ENCODE measurements at regions of chr3 and their contacts with region 1.

Region 1: DNA sequence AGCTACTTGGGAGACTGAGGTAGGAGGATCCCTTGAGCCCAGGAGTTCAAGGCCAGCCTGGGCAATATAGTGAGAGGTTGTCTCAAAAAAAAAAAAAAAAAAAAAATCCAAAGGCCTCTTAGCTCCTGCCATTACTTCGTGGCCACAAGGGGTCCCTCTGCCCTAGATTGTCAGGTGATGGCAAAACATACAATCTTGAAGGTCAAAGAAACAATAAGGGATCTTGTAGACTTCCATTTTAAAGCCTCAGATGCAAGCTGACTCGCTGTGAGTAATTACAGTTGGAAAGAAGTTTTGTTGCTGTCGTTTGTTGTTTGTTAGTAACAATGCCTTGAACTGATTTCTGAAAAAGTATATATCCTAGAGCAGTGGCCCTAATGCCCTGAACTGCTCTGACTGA is 55.9 kb upstream of the PLCL2 start:
- DNase-seq: peak; percentile 71
- H3K4me3 Mint-ChIP-seq: no peak overlapping the region
- H3K27ac Mint-ChIP-seq: no peak overlapping the region
- H3K4me1 Mint-ChIP-seq: peaks cover 15% of the 10 kb centered on the region
- H3K27me3 Mint-ChIP-seq: no peaks in the 10 kb centered on the region

Region 2: DNA sequence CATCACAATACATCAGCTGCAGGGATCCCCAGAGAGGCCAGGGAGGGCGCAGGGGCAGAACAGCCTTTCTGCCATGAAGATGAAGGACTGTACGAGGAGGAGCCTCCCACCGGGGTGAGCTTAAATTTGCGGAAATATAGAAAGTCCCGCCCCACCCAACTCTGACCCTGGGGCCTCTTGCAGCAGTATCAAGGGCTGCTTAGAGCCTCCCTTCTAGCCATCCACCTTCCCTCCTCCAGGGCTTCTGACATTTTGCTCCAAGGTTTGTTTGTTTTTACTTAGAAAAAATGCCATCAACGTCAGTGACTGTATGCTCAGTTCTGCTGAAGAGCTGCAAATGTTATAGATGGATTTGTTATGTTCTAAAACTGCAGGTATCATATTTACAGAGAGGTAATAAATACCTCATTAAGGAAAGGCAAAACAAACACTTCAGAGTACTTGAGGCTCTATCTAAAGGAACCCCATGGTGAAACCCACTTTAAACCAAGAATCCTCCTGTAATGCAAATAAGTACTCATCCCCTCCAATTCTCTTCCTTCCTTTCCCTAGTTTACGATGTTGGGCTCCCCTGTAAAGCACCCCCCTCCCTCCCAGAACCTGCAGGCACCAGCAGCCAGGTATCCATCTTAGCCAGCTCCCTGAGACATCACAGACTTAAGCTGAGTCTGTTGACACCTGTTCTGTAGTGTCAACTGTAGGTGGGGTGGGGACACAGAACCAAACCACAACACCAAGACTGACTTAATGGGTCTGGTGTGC is 345.9 kb before region 1 on chr3:
- CTCF ChIA-PET with region 1: no interaction called
- POLR2A ChIA-PET with region 1: no interaction called
- intact Hi-C with region 1: no loop called
- DNase-seq: peak; percentile 50
- H3K4me3 Mint-ChIP-seq: peak overlapping the region; percentile 35
- H3K27ac Mint-ChIP-seq: peak overlapping the region; percentile 76
- H3K4me1 Mint-ChIP-seq: peaks cover 72% of the 10 kb centered on the region
- H3K27me3 Mint-ChIP-seq: no peaks in the 10 kb centered on the region

Region 3: DNA sequence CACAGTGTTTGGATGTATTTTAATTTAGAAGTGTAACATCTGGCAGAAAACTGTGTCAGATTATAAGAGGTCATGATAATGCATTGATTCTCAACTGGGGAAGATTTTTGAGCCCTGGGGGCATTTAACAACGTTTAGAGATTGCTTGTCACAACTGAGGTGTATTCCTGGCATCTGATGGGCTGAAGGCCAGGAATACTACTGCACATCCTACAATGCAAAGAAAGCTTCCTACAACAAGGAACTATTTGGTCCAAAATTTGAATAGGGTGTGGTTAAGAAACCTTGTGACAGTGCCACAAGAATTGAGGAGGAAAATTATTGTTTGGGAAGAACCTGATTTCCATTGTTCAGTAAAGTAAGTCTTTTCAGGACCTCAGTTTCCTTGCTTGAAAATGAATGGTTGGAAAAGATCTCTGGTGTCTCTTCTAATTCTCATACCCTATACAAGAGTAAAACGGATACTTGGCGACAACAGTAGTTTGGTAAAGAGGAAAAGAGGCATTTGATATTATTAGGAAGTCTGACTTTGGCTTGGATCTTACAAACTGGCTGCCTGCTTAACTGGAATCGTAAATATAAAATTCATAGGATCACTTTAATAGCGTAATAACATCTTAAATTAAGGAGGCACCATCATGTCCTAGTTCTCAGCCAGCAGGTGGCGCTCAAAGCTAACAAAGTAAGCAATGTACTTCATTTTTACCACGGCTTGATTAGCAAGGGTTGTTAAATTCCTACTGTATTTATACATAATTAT is 227.9 kb before region 1 on chr3:
- CTCF ChIA-PET with region 1: interaction called, 5 read pairs
- POLR2A ChIA-PET with region 1: no interaction called
- intact Hi-C with region 1: loop called (anchors 2 kb)
- DNase-seq: peak; percentile 81
- H3K4me3 Mint-ChIP-seq: no peak overlapping the region
- H3K27ac Mint-ChIP-seq: no peak overlapping the region
- H3K4me1 Mint-ChIP-seq: peaks cover 24% of the 10 kb centered on the region
- H3K27me3 Mint-ChIP-seq: peaks cover 10% of the 10 kb centered on the region

Region 4: DNA sequence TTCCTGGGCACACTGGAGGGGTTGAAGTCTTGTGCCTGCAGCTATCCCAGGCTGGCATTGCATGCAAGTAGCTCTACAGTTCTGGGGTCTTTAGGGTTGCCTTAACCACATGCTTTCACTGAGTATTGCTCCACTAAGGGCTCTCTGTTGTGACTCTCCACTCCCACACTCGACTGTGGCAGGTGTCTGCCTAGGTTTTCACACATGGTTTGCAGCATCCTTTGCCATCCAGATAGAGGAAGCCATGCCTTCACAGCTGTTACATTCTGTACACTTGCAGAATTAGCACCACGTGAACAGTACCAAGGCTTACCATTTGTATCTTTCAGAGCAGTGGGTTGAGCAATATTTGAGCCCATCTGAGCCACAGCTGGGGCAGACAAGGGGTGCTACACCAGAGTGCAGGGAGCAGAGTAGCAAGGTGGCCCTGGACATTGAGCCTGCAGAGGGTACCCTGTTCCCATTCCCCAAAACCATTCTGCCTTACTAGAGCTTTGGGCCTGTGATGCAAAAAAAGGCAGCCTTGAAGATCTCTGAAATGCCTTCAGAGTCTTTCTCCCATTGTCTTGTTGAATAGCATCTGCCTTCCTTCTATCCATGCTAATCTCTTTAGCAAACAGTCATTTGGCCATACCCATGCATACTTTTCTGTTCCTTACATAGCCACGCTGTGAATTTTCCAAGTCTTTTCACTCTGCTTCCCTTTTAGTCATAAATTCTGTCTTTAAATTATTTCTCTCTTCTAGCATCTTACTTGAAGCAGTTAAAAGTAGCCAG is 39.3 kb before region 1 on chr3:
- CTCF ChIA-PET with region 1: no interaction called
- POLR2A ChIA-PET with region 1: no interaction called
- intact Hi-C with region 1: loop called (anchors 1 kb)
- DNase-seq: no peak
- H3K4me3 Mint-ChIP-seq: no peak overlapping the region
- H3K27ac Mint-ChIP-seq: no peak overlapping the region
- H3K4me1 Mint-ChIP-seq: peaks cover 21% of the 10 kb centered on the region
- H3K27me3 Mint-ChIP-seq: peaks cover 6% of the 10 kb centered on the region

Region 5: GRCh38 chr3:16797523-16798457 is 31.0 kb before region 1 on chr3:
- CTCF ChIA-PET with region 1: no interaction called
- POLR2A ChIA-PET with region 1: no interaction called
- intact Hi-C with region 1: loop called (anchors 2 kb)
- DNase-seq: no peak
- H3K4me3 Mint-ChIP-seq: no peak overlapping the region
- H3K27ac Mint-ChIP-seq: peak overlapping the region; percentile 64
- H3K4me1 Mint-ChIP-seq: peaks cover 30% of the 10 kb centered on the region
- H3K27me3 Mint-ChIP-seq: peaks cover 1% of the 10 kb centered on the region

Region 6: DNA sequence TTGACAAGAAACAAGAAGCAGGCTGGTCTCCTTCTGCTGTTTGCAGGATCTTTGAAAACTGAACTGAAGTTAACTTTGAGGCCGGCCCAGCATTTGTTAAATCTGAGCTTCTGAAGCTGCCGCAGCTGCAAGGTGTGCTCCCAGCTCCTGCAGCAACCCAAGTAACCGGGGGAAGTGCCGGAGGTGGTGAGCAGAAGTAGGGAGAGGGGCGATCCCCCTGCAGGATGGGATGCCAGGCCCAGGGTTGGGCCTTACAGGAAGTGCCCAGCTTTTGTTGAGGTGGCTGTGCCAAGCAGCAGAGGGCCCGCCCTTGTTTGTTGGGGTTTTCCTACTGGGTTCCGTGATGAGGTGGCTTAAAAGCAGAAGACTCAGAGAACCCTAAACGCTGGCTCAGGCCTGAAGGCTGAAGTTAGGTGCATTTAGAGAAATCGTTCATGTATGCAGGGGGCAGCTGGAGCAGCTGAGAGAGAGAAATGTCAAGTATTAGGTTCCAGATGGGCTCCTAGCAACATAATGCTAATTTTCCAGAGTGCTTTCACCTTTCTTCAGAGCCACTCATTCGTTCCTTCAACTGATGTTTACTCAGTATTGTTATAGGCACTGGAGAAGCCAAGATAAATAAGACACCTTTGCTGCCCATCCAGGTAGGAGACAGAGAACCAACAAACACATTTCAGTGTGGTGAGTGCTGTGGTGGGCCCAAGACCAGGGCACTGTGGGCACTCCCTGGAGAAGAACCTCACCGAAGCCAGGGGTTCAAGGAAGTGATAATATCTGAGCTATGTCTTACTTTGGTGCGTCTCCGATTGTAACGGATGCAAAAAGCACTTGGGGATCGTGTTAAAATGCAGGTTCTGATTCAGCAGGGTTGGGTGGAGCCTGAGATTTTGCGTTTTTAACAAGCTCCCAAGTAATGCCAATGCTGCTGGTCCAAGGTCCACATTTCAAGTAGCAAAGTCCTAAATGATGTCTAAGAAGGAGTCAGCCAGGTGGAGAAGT is 13.8 kb after region 1 on chr3:
- CTCF ChIA-PET with region 1: interaction called, 8 read pairs
- POLR2A ChIA-PET with region 1: no interaction called
- intact Hi-C with region 1: loop called (anchors 1 kb)
- DNase-seq: peak; percentile 89
- H3K4me3 Mint-ChIP-seq: peak overlapping the region; percentile 67
- H3K27ac Mint-ChIP-seq: peak overlapping the region; percentile 91
- H3K4me1 Mint-ChIP-seq: peaks cover 80% of the 10 kb centered on the region
- H3K27me3 Mint-ChIP-seq: no peaks in the 10 kb centered on the region

Region 7: DNA sequence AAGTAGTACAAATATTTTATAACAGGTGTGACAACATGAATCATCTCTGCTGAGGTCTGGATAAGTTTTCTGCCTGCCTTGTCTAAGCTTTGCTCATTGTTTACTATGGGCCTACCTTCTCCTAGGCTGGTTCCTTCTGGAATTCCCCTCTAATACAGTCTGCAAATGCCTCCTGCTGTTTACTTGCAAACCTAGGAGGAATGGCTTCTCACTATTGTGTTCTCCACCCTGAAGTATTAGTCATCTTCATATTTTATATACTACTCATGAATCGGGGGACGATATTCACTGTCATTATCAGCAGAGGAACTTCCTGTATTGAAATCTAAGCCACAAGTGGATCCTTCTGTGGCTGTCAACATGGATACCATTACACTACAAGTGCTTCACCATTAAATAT is 210.8 kb after region 1 on chr3:
- CTCF ChIA-PET with region 1: no interaction called
- POLR2A ChIA-PET with region 1: no interaction called
- intact Hi-C with region 1: loop called (anchors 5 kb)
- DNase-seq: no peak
- H3K4me3 Mint-ChIP-seq: no peak overlapping the region
- H3K27ac Mint-ChIP-seq: peak overlapping the region; percentile 57
- H3K4me1 Mint-ChIP-seq: peaks cover 32% of the 10 kb centered on the region
- H3K27me3 Mint-ChIP-seq: no peaks in the 10 kb centered on the region

Region 8: DNA sequence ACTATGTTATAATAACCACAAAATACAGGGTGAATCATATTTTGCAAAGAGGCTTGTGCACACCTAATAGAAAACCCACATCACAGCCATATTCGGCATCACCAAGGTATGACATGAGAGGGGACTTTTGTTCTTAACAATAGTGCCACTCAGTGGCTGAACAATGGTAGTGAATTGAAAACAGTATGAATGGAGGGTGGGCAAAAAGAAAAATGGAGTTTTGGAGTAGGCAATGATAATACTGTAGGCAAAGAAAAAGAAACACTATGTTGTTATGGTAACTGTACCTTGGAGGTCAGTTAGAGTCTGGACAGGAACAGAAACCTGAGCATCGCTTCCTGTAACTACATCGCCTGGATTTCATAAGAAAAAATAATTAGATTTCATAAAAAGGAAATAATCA is 404.6 kb after region 1 on chr3:
- CTCF ChIA-PET with region 1: interaction called, 10 read pairs
- POLR2A ChIA-PET with region 1: no interaction called
- intact Hi-C with region 1: loop called (anchors 1 kb)
- DNase-seq: peak; percentile 25
- H3K4me3 Mint-ChIP-seq: no peak overlapping the region
- H3K27ac Mint-ChIP-seq: no peak overlapping the region
- H3K4me1 Mint-ChIP-seq: peaks cover 21% of the 10 kb centered on the region
- H3K27me3 Mint-ChIP-seq: no peaks in the 10 kb centered on the region

Region 9: DNA sequence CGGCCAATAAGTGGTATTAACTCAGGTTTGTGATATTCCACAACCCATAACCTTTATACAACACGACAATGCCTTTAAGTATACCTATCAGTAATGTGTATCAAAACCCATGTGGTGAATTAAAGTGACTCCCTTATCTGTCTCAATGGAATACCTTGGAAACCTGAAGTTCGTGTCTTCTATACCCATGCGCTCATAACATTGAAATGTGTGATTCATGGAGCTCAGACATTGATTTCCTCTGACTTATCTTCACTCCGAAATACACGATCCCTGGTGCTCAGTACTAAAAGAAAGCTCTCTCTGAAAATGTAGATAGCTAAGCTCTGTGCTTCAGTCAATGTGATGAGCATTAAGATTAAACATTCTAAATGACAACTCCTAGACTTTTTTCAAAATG is 773.3 kb after region 1 on chr3:
- CTCF ChIA-PET with region 1: no interaction called
- POLR2A ChIA-PET with region 1: no interaction called
- intact Hi-C with region 1: no loop called
- DNase-seq: no peak
- H3K4me3 Mint-ChIP-seq: no peak overlapping the region
- H3K27ac Mint-ChIP-seq: no peak overlapping the region
- H3K4me1 Mint-ChIP-seq: peaks cover 12% of the 10 kb centered on the region
- H3K27me3 Mint-ChIP-seq: no peaks in the 10 kb centered on the region